Heart right ventricle (tissue), 16 donors: ENCODE measurements at regions of chr3 and their contacts with region 1.

Region 1: DNA sequence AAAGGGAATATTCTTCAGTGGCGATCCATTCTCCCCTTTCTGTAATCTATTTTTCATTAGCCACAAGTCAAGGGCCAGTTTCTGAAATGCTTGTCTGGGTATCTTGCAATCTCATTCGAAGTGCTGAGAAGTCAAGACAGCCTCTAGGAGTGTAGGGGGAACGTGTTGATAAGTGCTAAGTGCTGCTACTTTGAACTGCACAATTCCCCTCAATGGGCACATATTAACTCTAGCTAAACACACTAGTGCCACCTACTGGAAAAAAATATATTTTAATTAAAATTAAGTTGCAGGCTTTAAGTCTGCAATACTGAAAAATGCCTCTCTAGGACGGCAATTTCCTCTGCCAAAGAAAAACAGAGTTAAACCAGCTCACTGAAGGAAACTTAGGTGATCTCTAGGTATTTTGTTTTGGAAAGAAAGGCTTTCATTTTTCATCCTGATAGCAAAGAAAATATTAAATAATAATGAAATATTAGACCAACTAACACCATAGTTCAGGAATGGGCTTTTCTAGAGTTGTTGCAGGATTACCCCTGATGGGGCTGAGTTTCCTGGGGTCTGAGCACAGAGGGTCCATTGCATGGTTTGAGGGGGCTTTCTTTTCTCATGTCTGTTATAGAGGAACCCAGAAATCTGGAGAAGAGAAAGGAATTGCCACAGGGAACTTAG is 181.9 kb upstream of the KBTBD8 start:
- DNase-seq: no peak
- ATAC-seq: peak; percentile 71 to 93 (median 78)
- H3K4me3 ChIP-seq: no peak overlapping the region
- H3K27ac ChIP-seq: no peak overlapping the region
- H3K4me1 ChIP-seq: peaks cover 0 to 5% (median 0%) of the 10 kb centered on the region in 9 donors
- H3K27me3 ChIP-seq: no peaks in the 10 kb centered on the region
- CTCF ChIP-seq: peak; percentile 53 to 85 (median 69)

Region 2: GRCh38 chr3:66253790-66254620 is 562.2 kb before region 1 on chr3:
- intact Hi-C with region 1: loop called in 8 of 10 experiments (anchors 2 to 5 kb)
- DNase-seq: no peak
- ATAC-seq: peak in 2 of 8 donors; percentile 11 to 29
- H3K4me3 ChIP-seq: no peak overlapping the region
- H3K27ac ChIP-seq: no peak overlapping the region
- H3K4me1 ChIP-seq: no peaks in the 10 kb centered on the region
- H3K27me3 ChIP-seq: no peaks in the 10 kb centered on the region
- CTCF ChIP-seq: peak; percentile 49 to 89 (median 80)

Region 3: GRCh38 chr3:66276705-66277274 is 539.4 kb before region 1 on chr3:
- intact Hi-C with region 1: loop called in 9 of 10 experiments (anchors 1 to 5 kb)
- DNase-seq: peak in 1 of 2 donors; percentile 75
- ATAC-seq: peak in 4 of 8 donors; percentile 38 to 79 (median 58)
- H3K4me3 ChIP-seq: no peak overlapping the region
- H3K27ac ChIP-seq: no peak overlapping the region
- H3K4me1 ChIP-seq: peaks cover 0 to 7% (median 0%) of the 10 kb centered on the region in 9 donors
- H3K27me3 ChIP-seq: no peaks in the 10 kb centered on the region
- CTCF ChIP-seq: peak; percentile 49 to 83 (median 73)

Region 4: GRCh38 chr3:66407611-66408218 is 408.5 kb before region 1 on chr3:
- intact Hi-C with region 1: loop called (anchors 2 to 5 kb)
- DNase-seq: peak; percentile 71 to 82
- ATAC-seq: peak; percentile 48 to 77 (median 65)
- H3K4me3 ChIP-seq: no peak overlapping the region
- H3K27ac ChIP-seq: peak overlapping the region in 3 of 10 donors; percentile 33 to 76 (median 41)
- H3K4me1 ChIP-seq: peaks cover 17 to 72% (median 56%) of the 10 kb centered on the region in 9 donors
- H3K27me3 ChIP-seq: no peaks in the 10 kb centered on the region
- CTCF ChIP-seq: peak; percentile 87 to 98 (median 95)

Region 5: GRCh38 chr3:66507423-66508260 is 308.6 kb before region 1 on chr3:
- intact Hi-C with region 1: loop called in 6 of 10 experiments (anchors 5 to 10 kb)
- DNase-seq: peak; percentile 19 to 60
- ATAC-seq: peak; percentile 11 to 98 (median 91)
- H3K4me3 ChIP-seq: no peak overlapping the region
- H3K27ac ChIP-seq: peak overlapping the region in 7 of 10 donors; percentile 3 to 71 (median 46)
- H3K4me1 ChIP-seq: peaks cover 0 to 8% (median 0%) of the 10 kb centered on the region in 9 donors
- H3K27me3 ChIP-seq: no peaks in the 10 kb centered on the region
- CTCF ChIP-seq: no peak

Region 6: DNA sequence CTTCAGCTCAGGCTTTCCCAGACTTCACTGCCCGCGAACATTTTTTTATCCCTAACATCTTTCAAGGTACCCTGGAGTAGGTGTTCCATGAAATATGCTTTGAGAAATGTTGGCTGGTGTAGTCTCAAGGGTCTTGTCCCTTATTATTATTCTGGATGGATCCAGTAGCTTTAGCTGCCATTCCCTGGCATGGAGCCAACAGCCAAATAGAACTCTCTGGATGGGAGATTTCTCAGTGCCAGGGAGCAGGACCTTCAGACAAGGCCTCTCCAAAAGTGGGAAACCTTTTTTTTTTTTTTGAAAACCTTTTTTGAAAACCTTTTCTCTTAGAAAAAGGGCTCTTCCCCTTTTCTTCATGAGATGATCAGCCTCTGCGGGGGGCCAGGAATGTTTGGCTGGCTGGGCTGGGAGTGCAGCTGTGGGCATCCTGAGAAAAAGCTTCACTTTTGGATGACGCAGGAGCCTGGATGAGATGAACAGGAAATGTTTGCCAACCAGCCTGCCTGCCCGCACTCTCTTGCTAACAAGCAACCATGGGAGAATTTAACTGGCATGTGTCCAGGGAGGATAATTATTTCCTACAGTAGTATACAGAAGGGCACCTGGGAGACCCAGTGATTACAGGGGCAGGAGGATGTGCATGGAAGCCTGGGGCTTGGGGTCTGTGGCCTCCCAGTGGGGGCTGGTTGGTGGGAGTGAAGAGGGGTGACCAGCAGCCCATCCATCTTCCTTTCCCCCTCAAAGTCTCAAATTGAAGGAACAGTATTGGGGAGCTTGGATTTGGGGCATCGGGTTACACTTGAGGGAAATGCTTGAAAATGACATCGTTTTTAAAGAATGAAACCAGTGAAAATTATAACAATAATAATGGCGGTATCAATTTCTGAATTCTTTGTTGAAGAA is 206.3 kb before region 1 on chr3:
- intact Hi-C with region 1: no loop called
- DNase-seq: no peak
- ATAC-seq: no peak
- H3K4me3 ChIP-seq: no peak overlapping the region
- H3K27ac ChIP-seq: no peak overlapping the region
- H3K4me1 ChIP-seq: no peaks in the 10 kb centered on the region
- H3K27me3 ChIP-seq: no peaks in the 10 kb centered on the region
- CTCF ChIP-seq: no peak

Region 7: GRCh38 chr3:66762916-66763710 is 53.1 kb before region 1 on chr3:
- intact Hi-C with region 1: no loop called
- DNase-seq: no peak
- ATAC-seq: peak in 3 of 8 donors; percentile 42 to 54 (median 46)
- H3K4me3 ChIP-seq: no peak overlapping the region
- H3K27ac ChIP-seq: no peak overlapping the region
- H3K4me1 ChIP-seq: no peaks in the 10 kb centered on the region
- H3K27me3 ChIP-seq: no peaks in the 10 kb centered on the region
- CTCF ChIP-seq: no peak